ENCODE measurements at regions of chr21 and their contacts with region 1.

Region 1: DNA sequence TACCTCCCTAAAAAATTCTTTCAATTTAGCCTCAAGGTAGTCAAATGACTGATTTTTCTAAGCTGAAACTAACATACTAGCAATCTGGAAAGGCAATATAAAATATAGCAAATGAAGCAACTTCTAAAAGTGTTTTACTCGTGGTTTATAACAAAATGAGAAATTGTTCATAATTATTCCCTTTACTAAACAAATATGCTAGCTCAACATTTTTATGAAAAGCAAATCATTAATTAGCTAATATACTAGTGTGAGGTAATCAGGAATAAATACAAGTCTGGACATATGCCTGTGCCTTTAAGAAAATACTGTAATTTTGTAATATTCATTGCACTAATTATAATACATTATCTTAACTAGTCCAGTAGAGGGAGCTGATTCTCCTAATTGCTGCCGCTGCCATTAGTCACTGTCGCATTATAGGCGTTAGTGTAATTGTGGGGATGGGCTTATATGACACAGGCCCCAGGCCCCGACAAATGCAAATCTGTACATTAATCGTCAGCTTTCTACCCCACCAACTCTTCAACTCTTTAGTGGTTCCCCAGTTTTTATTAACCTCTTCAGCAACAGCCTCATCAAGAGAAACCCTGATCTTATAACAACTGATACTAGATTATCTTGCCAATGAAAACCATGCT is 160.9 kb downstream of the GABPA start:
- DNase-seq: no peak

Region 2: GRCh38 chr21:26007951-26008498 is 112.3 kb after region 1 on chr21:
- intact Hi-C with region 1: loop called (anchors 10 kb)
- DNase-seq: no peak